ENCODE measurements at regions of chr12 and their contacts with region 1.

Region 1: GRCh38 chr12:124321040-124321481 is 26.2 kb downstream of the RFLNA start:
- DNase-seq: peak; percentile 85

Region 2: GRCh38 chr12:124053851-124054250 is 267.2 kb before region 1 on chr12:
- intact Hi-C with region 1: loop called (anchors 2 kb)
- DNase-seq: no peak

Region 3: GRCh38 chr12:124294780-124295241 is 26.2 kb before region 1 on chr12 and contains the start of gene RFLNA:
- intact Hi-C with region 1: no loop called
- DNase-seq: no peak
- total RNA-seq, gene RFLNA: not detected

Region 4: GRCh38 chr12:124620751-124621660 is 299.9 kb after region 1 on chr12:
- intact Hi-C with region 1: no loop called
- DNase-seq: no peak

Measured in cardiac septum (tissue), 1 donor.